ENCODE measurements at regions of chr10 and their contacts with region 1.

Region 1: GRCh38 chr10:110304780-110305421 is at the start of gene SMNDC1:
- DNase-seq: peak; percentile 93
- ATAC-seq: peak; percentile 92
- H3K4me3 Mint-ChIP-seq: peak within 1 kb of the TSS; percentile 95
- H3K27ac Mint-ChIP-seq: peak within 1 kb of the TSS; percentile 99
- H3K4me1 Mint-ChIP-seq: peaks cover 54% of the 10 kb centered on the region
- H3K27me3 Mint-ChIP-seq: no peaks in the 10 kb centered on the region
- CTCF ChIP-seq: no peak
- total RNA-seq, gene SMNDC1: 32.7 and 35.6 TPM in 2 replicates

Region 2: DNA sequence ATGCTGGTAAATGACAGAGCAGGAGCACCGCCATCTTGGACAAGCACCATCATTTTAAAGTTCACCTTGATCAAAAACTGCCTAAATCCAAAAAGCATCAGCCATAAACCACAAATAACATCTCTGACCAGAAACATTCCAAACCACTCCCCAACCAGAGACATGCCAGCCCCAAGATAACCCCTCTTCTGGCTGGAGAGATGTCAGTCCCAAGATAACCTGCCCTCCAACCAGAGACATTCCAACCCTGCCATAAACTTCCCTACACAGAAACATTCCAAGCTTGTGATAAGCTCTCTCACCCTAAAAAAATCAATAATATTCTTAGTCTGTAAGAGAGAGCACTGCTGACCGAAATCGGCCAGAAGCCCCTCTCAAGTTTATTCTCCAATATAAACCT is 1040.9 kb before region 1 on chr10:
- CTCF ChIA-PET with region 1: no interaction called
- POLR2A ChIA-PET with region 1: no interaction called
- intact Hi-C with region 1: no loop called
- DNase-seq: no peak
- ATAC-seq: no peak
- H3K4me3 Mint-ChIP-seq: no peak overlapping the region
- H3K27ac Mint-ChIP-seq: no peak overlapping the region
- H3K4me1 Mint-ChIP-seq: no peaks in the 10 kb centered on the region
- H3K27me3 Mint-ChIP-seq: no peaks in the 10 kb centered on the region
- CTCF ChIP-seq: no peak

Region 3: DNA sequence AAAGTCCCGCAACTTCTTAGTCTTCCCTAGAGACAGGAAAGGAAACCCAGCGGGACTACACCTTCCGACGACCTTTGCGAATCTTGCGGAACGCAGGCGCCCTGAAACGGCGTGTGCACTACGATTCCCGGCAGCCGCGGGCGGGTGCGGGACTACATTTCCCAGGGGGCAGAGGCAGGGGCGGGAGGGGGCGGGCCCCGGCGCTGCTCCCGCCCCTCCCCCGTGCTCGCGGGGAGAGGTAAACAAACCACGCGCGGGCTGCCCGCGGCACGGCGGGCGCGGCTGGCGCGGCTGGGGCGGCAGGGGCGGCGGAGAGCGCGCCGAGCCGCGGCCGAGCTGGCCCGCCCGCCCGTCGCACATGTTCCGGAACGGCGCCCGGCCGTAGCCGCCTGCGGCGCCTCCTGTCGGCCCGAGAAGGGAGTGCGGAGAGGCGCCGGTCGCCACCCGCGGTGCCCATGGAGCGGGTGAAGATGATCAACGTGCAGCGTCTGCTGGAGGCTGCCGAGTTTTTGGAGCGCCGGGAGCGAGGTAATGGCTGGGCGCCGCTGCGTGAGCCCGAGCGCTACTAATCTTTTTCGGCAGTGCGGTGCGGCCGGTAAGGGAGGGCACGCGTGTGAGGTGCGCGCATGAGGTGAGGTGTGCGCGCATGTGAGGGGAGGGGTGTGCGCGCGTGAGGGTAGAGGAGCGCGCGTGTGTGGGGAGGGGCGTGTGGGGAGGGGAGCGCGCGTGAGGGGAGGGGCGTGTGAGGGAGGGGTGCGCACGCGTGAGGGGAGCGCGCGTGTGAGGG is 79.0 kb before region 1 on chr10:
- CTCF ChIA-PET with region 1: no interaction called
- POLR2A ChIA-PET with region 1: interaction called, 3 read pairs
- intact Hi-C with region 1: loop called (anchors 2 kb)
- DNase-seq: peak; percentile 83
- ATAC-seq: peak; percentile 51
- H3K4me3 Mint-ChIP-seq: peak overlapping the region; percentile 97
- H3K27ac Mint-ChIP-seq: peak overlapping the region; percentile 96
- H3K4me1 Mint-ChIP-seq: peaks cover 28% of the 10 kb centered on the region
- H3K27me3 Mint-ChIP-seq: no peaks in the 10 kb centered on the region
- CTCF ChIP-seq: no peak

Region 4: GRCh38 chr10:110535958-110536891 is 231.3 kb after region 1 on chr10:
- CTCF ChIA-PET with region 1: interaction called, 5 read pairs
- POLR2A ChIA-PET with region 1: no interaction called
- intact Hi-C with region 1: loop called (anchors 1 kb)
- DNase-seq: peak; percentile 49
- ATAC-seq: peak; percentile 83
- H3K4me3 Mint-ChIP-seq: peak overlapping the region; percentile 62
- H3K27ac Mint-ChIP-seq: peak overlapping the region; percentile 68
- H3K4me1 Mint-ChIP-seq: peaks cover 31% of the 10 kb centered on the region
- H3K27me3 Mint-ChIP-seq: peaks cover 4% of the 10 kb centered on the region
- CTCF ChIP-seq: no peak

Region 5: DNA sequence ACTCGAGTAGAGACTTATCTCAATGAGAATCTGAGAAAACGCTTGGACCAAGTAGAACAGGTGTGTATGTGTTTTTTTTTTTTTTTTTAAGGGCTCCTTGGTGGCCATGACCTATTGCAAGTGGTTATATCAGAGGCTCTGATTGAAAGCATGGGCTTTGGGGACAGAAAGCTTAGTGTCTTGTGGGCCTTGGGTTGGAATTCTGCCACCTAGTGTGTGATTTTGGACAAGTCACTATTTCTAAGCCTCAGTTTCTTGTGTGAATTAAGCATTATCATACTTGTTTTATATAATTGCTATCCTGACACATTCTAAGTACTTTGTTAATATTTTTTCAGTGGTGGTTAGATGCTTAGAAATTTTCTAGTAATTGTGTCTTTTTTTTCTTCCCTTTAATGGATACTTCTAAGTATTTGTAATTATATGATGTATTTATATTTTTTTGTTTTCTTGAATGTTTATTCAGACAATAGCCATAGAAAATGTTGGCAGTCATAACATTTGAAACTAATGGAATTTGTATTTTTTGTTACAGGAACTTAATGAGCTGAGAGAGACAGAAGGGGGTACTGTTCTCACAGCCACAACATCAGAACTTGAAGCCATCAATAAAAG is 295.7 kb after region 1 on chr10:
- CTCF ChIA-PET with region 1: interaction called, 80 read pairs
- POLR2A ChIA-PET with region 1: interaction called, 14 read pairs
- intact Hi-C with region 1: loop called (anchors 1 kb)
- DNase-seq: no peak
- ATAC-seq: peak; percentile 67
- H3K4me3 Mint-ChIP-seq: no peak overlapping the region
- H3K27ac Mint-ChIP-seq: no peak overlapping the region
- H3K4me1 Mint-ChIP-seq: no peaks in the 10 kb centered on the region
- H3K27me3 Mint-ChIP-seq: no peaks in the 10 kb centered on the region
- CTCF ChIP-seq: no peak

Region 6: GRCh38 chr10:110864662-110865140 is 559.8 kb after region 1 on chr10:
- CTCF ChIA-PET with region 1: no interaction called
- POLR2A ChIA-PET with region 1: interaction called, 11 read pairs
- intact Hi-C with region 1: no loop called
- DNase-seq: no peak
- ATAC-seq: peak; percentile 50
- H3K4me3 Mint-ChIP-seq: peak overlapping the region; percentile 79
- H3K27ac Mint-ChIP-seq: peak overlapping the region; percentile 97
- H3K4me1 Mint-ChIP-seq: peaks cover 98% of the 10 kb centered on the region
- H3K27me3 Mint-ChIP-seq: no peaks in the 10 kb centered on the region
- CTCF ChIP-seq: no peak

Region 7: GRCh38 chr10:112140110-112140970 is 1835.4 kb after region 1 on chr10:
- CTCF ChIA-PET with region 1: no interaction called
- POLR2A ChIA-PET with region 1: no interaction called
- intact Hi-C with region 1: loop called (anchors 10 kb)
- DNase-seq: peak; percentile 53
- ATAC-seq: peak; percentile 99
- H3K4me3 Mint-ChIP-seq: no peak overlapping the region
- H3K27ac Mint-ChIP-seq: no peak overlapping the region
- H3K4me1 Mint-ChIP-seq: peaks cover 3% of the 10 kb centered on the region
- H3K27me3 Mint-ChIP-seq: no peaks in the 10 kb centered on the region
- CTCF ChIP-seq: peak; percentile 61